ENCODE measurements at regions of chr1 and their contacts with region 1.

Region 1: DNA sequence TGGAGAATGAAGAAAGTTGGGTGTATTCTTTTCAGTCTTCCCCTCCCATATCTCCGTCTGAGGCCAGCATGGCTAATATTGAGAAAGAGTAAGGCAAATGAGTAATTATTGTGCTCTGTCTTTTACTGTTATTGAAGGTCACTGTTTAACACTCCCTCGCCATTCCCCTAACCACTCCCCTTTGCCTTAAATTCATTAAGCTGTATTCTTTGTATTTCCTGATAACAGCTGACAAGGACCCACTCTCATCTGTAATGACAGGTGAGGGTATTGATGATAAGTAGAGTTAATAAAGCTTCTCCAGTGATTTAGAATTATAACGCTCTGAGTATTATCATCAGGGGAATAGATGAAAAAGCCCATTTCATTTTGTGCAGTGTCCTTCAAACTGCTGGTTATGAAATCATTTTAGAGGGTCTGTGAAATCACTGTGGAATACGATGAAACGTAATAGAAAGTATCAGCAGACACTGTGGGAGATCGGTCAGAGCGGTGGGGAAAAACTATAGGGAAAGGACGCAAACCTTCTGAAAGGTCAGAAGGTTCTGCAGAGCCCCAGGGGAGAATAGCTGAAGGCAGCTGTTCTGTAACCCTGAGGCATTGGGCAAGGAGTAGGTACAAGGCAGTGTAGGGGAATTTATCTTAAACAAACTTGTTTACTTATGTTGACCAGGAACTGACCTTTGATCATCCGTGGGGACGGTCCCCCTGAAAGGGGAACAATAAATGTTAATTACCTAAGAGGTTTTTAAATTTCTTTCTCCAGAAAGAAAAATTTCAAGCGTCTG is 46.3 kb upstream of the CACYBP start:
- DNase-seq: peak; percentile 62
- ATAC-seq: peak; percentile 91
- H3K4me3 ChIP-seq: peak overlapping the region in 2 of 3 experiments; percentile 12 to 17; a peak in 1 of 6 replicates
- H3K27ac ChIP-seq: peak overlapping the region; percentile 53
- H3K4me1 ChIP-seq: peaks cover 37% of the 10 kb centered on the region
- H3K27me3 ChIP-seq: no peaks in the 10 kb centered on the region
- CTCF ChIP-seq: no peak
- EP300 ChIP-seq: peak in 1 of 2 experiments; percentile 59; a peak in 1 of 4 replicates
- POLR2A ChIP-seq: no peak
- RAD21 ChIP-seq: no peak

Region 2: DNA sequence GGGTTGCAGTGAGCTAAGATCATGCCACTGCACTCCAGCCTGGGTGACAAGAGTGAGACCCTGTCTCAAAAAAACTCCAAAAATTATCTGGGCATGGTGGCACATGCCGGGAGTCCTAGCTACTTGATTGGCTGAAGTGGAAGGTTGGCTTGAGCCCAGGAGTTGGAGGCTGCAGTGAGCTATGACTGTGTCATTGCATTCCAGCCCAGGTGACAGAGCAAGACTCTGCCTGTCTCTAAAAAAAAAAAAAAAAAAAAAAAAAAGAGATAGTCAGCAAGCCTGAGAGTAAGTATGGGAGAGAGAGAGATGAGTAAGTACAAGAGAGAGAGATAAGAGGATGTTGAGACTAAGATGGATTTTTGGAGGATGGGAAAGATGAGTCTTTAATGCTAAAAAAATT is 134.5 kb before region 1 on chr1:
- CTCF ChIA-PET with region 1: no interaction called
- POLR2A ChIA-PET with region 1: no interaction called
- in situ Hi-C with region 1: no loop called
- intact Hi-C with region 1: no loop called
- DNase-seq: no peak
- ATAC-seq: no peak
- H3K4me3 ChIP-seq: no peak overlapping the region
- H3K27ac ChIP-seq: no peak overlapping the region
- H3K4me1 ChIP-seq: no peaks in the 10 kb centered on the region
- H3K27me3 ChIP-seq: no peaks in the 10 kb centered on the region
- CTCF ChIP-seq: no peak
- EP300 ChIP-seq: no peak
- POLR2A ChIP-seq: no peak
- RAD21 ChIP-seq: no peak

Region 3: GRCh38 chr1:174858301-174858700 is 95.2 kb before region 1 on chr1:
- CTCF ChIA-PET with region 1: no interaction called
- POLR2A ChIA-PET with region 1: no interaction called
- in situ Hi-C with region 1: no loop called
- intact Hi-C with region 1: no loop called
- DNase-seq: no peak
- ATAC-seq: no peak
- H3K4me3 ChIP-seq: no peak overlapping the region
- H3K27ac ChIP-seq: no peak overlapping the region
- H3K4me1 ChIP-seq: no peaks in the 10 kb centered on the region
- H3K27me3 ChIP-seq: no peaks in the 10 kb centered on the region
- CTCF ChIP-seq: no peak
- EP300 ChIP-seq: no peak
- POLR2A ChIP-seq: no peak
- RAD21 ChIP-seq: no peak

Region 4: GRCh38 chr1:174942547-174943255 is 10.8 kb before region 1 on chr1:
- CTCF ChIA-PET with region 1: no interaction called
- POLR2A ChIA-PET with region 1: interaction called, 17 read pairs
- in situ Hi-C with region 1: no loop called
- intact Hi-C with region 1: loop called (anchors 1 kb)
- DNase-seq: peak; percentile 85
- ATAC-seq: peak; percentile 99
- H3K4me3 ChIP-seq: peak overlapping the region in 1 of 3 experiments; percentile 19; a peak in 1 of 6 replicates
- H3K27ac ChIP-seq: peak overlapping the region; percentile 56
- H3K4me1 ChIP-seq: peaks cover 33% of the 10 kb centered on the region
- H3K27me3 ChIP-seq: no peaks in the 10 kb centered on the region
- CTCF ChIP-seq: 0 out of 2 replicates have a peak, but pooled peaks have one; percentile 8
- EP300 ChIP-seq: peak; percentile 57 to 87; a peak in 3 of 4 replicates
- POLR2A ChIP-seq: no peak
- RAD21 ChIP-seq: no peak

Region 5: DNA sequence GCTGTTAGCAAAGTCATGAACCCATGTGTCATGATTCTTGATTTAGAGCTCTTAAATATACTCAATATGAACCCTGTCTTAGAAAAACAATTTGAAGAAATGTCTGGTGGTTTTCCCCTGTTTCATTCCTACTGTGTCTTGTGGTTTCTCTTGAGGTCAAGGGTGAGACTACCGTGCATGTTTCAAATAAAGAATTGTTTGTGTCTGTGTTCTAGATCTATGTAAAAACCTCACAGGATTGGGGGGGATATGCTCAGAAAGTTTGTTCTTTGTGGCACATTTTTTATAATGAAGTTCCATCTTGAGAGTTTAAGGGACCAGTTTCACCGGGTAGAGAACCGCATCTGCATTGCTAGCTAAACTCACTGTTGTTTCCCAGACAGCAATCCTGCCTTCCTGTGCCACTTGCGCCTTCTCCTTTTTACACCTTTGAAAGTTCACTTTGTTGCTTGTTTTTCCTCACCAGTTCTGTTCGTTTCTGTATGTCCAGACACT is 15.3 kb after region 1 on chr1:
- CTCF ChIA-PET with region 1: no interaction called
- POLR2A ChIA-PET with region 1: interaction called, 3 read pairs
- in situ Hi-C with region 1: no loop called
- intact Hi-C with region 1: loop called (anchors 2 kb)
- DNase-seq: no peak
- ATAC-seq: no peak
- H3K4me3 ChIP-seq: no peak overlapping the region
- H3K27ac ChIP-seq: no peak overlapping the region
- H3K4me1 ChIP-seq: peaks cover 36% of the 10 kb centered on the region
- H3K27me3 ChIP-seq: no peaks in the 10 kb centered on the region
- CTCF ChIP-seq: no peak
- EP300 ChIP-seq: no peak
- POLR2A ChIP-seq: no peak
- RAD21 ChIP-seq: no peak